ENCODE measurements at regions of chr6 and their contacts with region 1.

Region 1: GRCh38 chr6:96897383-96898240 is at the start of gene NDUFAF4:
- DNase-seq: peak; percentile 89 to 97 (median 92)
- ATAC-seq: peak; percentile 92
- H3K4me3 ChIP-seq: peak within 1 kb of the TSS; percentile 82
- H3K4me3 Mint-ChIP-seq: peak within 1 kb of the TSS; percentile 100
- H3K27ac ChIP-seq: peak within 1 kb of the TSS; percentile 89 to 95
- H3K27ac Mint-ChIP-seq: peak within 1 kb of the TSS; percentile 85
- H3K4me1 ChIP-seq: peaks cover 10% of the 10 kb centered on the region
- H3K4me1 Mint-ChIP-seq: peaks cover 42% of the 10 kb centered on the region
- H3K27me3 ChIP-seq: no peaks in the 10 kb centered on the region
- H3K27me3 Mint-ChIP-seq: peaks cover 9% of the 10 kb centered on the region
- CTCF ChIP-seq: peak; percentile 87
- total RNA-seq, gene NDUFAF4: 31.6 to 37.3 TPM

Region 2: DNA sequence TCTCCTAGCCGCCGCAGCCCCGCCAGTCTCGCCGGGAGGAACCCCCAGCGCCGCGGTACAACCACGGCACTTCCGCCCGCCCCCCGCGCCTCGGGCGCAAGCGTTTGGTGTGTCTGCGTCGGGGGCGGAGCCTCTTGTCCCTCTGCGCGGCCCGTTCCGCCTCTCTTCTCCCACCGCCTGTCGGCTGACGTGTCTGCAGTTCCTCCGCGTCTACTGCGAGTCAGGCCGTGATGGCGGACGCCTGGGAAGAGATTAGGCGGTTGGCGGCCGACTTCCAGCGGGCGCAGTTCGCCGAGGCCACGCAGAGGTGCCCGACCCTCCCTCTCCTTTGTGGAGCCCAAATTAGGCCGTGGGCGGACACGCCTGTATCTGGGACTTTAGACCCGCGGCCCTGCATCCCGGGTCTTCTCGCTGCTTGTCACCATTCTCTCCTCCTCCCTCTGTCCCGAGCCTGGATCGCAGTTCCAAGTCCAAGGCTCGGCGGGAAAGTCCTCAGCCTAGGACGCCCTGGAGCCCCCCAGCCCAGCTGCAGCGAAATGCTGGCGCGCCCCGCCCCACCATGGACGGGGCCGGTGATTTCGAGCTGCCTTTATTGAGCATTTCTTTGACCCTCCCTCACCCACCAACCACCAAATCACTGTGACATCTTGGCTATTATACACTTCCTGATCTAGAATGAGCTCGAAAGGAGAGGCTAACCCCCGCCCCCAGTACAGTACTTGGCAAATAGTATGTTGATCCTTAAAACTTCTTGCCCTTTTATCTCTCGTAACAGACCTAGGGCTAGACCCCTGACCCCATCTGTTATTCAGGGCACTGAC is 375.8 kb before region 1 on chr6 and contains the start of gene UFL1:
- CTCF ChIA-PET with region 1: no interaction called
- POLR2A ChIA-PET with region 1: interaction called, 4 read pairs
- intact Hi-C with region 1: loop called (anchors 1 to 2 kb)
- DNase-seq: peak; percentile 90 to 98 (median 93)
- ATAC-seq: peak; percentile 89
- H3K4me3 ChIP-seq: peak within 1 kb of the TSS; percentile 91
- H3K4me3 Mint-ChIP-seq: peak within 1 kb of the TSS; percentile 100
- H3K27ac ChIP-seq: peak within 1 kb of the TSS; percentile 98
- H3K27ac Mint-ChIP-seq: peak within 1 kb of the TSS; percentile 100
- H3K4me1 ChIP-seq: peaks cover 11% of the 10 kb centered on the region
- H3K4me1 Mint-ChIP-seq: peaks cover 52% of the 10 kb centered on the region
- H3K27me3 ChIP-seq: no peaks in the 10 kb centered on the region
- H3K27me3 Mint-ChIP-seq: no peaks in the 10 kb centered on the region
- CTCF ChIP-seq: no peak
- total RNA-seq, gene UFL1: 22.1 TPM

Region 3: GRCh38 chr6:96837081-96837971 is 60.3 kb before region 1 on chr6 and contains the start of gene GPR63:
- CTCF ChIA-PET with region 1: no interaction called
- POLR2A ChIA-PET with region 1: interaction called, 4 read pairs
- intact Hi-C with region 1: loop called (anchors 2 kb)
- DNase-seq: peak; percentile 27 to 82 (median 52)
- ATAC-seq: peak; percentile 87
- H3K4me3 ChIP-seq: peak within 1 kb of the TSS; percentile 72
- H3K4me3 Mint-ChIP-seq: peak within 1 kb of the TSS; percentile 92
- H3K27ac ChIP-seq: no peak within 1 kb of the TSS
- H3K27ac Mint-ChIP-seq: no peak within 1 kb of the TSS
- H3K4me1 ChIP-seq: peaks cover 19% of the 10 kb centered on the region
- H3K4me1 Mint-ChIP-seq: peaks cover 24% of the 10 kb centered on the region
- H3K27me3 ChIP-seq: peaks cover 0 to 22% of the 10 kb centered on the region in 2 experiments
- H3K27me3 Mint-ChIP-seq: peaks cover 50% of the 10 kb centered on the region
- CTCF ChIP-seq: no peak
- total RNA-seq, gene GPR63: 0.20 to 0.25 TPM

Region 4: DNA sequence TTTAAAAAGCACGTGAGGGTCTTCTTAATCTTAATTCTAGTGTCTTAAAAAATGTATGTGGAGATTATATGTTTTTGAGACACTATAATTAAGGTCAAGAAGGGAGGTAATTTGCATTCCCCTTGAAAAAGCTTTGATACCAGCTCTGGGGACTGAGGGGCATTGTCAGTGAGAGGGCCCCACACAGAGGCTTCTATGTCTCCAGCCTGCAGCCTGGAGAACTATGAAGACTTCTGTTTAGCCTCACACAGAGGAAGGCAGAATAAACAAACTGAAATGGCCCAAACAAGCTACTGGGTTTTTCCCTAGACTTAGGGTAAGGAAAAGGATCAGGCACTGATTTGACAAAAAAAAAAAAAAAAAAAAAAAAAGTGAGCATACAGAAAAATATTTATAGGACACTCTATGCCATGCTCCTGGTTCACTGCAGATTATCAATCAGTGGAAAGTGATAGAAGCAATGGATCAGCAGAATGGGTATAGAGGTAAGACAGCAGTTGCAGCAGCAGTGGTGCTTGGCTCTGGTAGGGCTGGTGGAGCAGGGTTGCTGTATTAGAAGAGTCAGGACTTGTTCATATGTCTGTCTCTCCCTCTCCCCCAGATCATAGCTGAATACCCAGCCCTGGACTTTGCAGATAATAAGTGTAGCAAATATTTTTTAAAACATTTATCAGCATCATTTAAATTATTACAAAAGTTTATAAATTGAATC is 112.3 kb after region 1 on chr6:
- CTCF ChIA-PET with region 1: no interaction called
- POLR2A ChIA-PET with region 1: no interaction called
- intact Hi-C with region 1: no loop called
- DNase-seq: no peak
- ATAC-seq: no peak
- H3K4me3 ChIP-seq: no peak overlapping the region
- H3K4me3 Mint-ChIP-seq: no peak overlapping the region
- H3K27ac ChIP-seq: no peak overlapping the region
- H3K27ac Mint-ChIP-seq: no peak overlapping the region
- H3K4me1 ChIP-seq: no peaks in the 10 kb centered on the region
- H3K4me1 Mint-ChIP-seq: no peaks in the 10 kb centered on the region
- H3K27me3 ChIP-seq: no peaks in the 10 kb centered on the region
- H3K27me3 Mint-ChIP-seq: no peaks in the 10 kb centered on the region
- CTCF ChIP-seq: no peak

Region 5: DNA sequence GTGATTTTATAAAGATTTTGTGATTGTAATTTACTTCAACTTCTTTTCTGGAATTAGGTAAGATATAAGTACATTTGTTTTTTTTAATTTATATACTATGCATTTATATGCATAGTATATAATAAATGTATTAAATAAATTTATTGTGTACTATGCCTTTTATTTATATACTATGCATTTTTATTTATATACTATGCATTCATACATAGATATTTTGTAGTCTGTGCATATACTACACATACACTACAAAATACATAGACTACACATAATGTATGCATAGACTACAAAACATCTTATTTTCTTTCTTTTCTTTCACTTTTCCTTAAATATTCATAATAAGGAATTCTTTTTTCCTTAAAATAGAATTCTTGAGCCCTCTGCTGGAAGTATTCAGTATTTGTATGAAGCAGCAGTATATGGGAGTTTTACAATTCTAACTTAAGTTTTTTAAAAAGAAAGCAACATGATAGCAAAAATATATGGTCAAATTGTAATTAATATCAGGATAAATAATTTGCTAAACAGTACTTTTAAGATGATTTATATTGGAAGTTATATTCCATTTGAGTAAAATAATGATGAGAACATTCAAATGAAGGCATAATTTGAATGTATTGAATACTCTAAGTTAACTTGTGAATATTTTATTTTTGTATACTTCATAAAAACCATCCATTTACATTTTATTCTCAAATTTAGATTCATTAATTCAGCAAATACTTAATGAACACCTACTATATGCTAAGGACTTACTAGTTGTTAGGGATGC is 156.2 kb after region 1 on chr6:
- CTCF ChIA-PET with region 1: no interaction called
- POLR2A ChIA-PET with region 1: no interaction called
- intact Hi-C with region 1: loop called (anchors 2 to 5 kb)
- DNase-seq: no peak
- ATAC-seq: no peak
- H3K4me3 ChIP-seq: no peak overlapping the region
- H3K4me3 Mint-ChIP-seq: no peak overlapping the region
- H3K27ac ChIP-seq: no peak overlapping the region
- H3K27ac Mint-ChIP-seq: no peak overlapping the region
- H3K4me1 ChIP-seq: no peaks in the 10 kb centered on the region
- H3K4me1 Mint-ChIP-seq: no peaks in the 10 kb centered on the region
- H3K27me3 ChIP-seq: no peaks in the 10 kb centered on the region
- H3K27me3 Mint-ChIP-seq: no peaks in the 10 kb centered on the region
- CTCF ChIP-seq: peak; percentile 50

Region 6: GRCh38 chr6:97282726-97283617 is 385.4 kb after region 1 on chr6 and contains the start of gene MMS22L:
- CTCF ChIA-PET with region 1: no interaction called
- POLR2A ChIA-PET with region 1: no interaction called
- intact Hi-C with region 1: loop called (anchors 5 to 10 kb)
- DNase-seq: peak; percentile 82 to 97 (median 90)
- ATAC-seq: peak; percentile 96
- H3K4me3 ChIP-seq: peak within 1 kb of the TSS; percentile 88
- H3K4me3 Mint-ChIP-seq: peak within 1 kb of the TSS; percentile 89
- H3K27ac ChIP-seq: peak within 1 kb of the TSS in 1 of 2 donors; percentile 38
- H3K27ac Mint-ChIP-seq: peak within 1 kb of the TSS; percentile 78
- H3K4me1 ChIP-seq: peaks cover 8% of the 10 kb centered on the region
- H3K4me1 Mint-ChIP-seq: peaks cover 28% of the 10 kb centered on the region
- H3K27me3 ChIP-seq: no peaks in the 10 kb centered on the region
- H3K27me3 Mint-ChIP-seq: no peaks in the 10 kb centered on the region
- CTCF ChIP-seq: no peak
- total RNA-seq, gene MMS22L: 5.3 to 5.8 TPM